Activated naive CD4-positive, alpha-beta T cell treated with anti-CD3 and anti-CD28 coated beads for 36 hours (primary cell): ENCODE measurements at regions of chr18 and their contacts with region 1.

Region 1: DNA sequence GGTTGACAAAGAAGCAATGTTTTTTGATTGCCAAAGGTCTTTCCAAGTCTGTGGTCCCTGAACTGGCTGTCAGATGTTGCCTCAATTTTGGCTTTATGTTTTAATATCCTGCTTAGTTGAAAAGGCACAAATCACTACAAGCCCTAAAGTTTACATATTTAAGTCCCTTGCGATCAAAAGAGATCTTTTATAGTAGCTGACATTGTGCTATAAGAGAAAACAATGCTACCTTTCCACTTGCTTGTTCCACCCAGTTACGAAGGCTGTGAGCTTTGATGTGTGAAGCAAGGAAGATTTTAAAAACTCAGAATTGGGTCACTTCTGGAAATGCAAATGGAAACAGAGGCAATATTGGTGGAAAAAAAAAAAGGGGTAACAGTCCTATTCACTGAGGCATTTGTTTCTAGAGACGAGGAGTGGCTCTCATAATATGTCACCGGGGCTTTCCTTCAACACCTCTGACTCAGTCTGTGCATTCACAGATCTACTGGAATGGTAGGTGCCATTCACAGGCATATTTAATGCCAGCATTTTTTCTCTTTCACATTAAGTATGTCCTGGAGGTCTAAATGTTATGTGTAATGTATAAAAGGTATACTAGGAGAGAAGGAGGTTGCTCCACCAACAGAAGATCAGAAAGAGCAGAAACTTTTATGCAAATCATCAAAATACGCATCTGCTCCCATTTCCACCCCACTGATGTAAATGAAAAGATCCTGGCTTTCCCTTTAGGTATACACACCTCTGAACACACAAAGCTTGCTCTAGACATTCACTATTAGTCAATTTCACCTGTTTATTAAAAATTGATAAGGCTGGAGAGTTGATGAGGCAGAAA is 91.8 kb downstream of the TGIF1 start:
- DNase-seq: peak; percentile 71
- H3K4me3 Mint-ChIP-seq: peak overlapping the region; percentile 0
- H3K27ac Mint-ChIP-seq: peak overlapping the region; percentile 66
- H3K4me1 Mint-ChIP-seq: peaks cover 24% of the 10 kb centered on the region
- H3K27me3 Mint-ChIP-seq: peaks cover 8% of the 10 kb centered on the region

Region 2: DNA sequence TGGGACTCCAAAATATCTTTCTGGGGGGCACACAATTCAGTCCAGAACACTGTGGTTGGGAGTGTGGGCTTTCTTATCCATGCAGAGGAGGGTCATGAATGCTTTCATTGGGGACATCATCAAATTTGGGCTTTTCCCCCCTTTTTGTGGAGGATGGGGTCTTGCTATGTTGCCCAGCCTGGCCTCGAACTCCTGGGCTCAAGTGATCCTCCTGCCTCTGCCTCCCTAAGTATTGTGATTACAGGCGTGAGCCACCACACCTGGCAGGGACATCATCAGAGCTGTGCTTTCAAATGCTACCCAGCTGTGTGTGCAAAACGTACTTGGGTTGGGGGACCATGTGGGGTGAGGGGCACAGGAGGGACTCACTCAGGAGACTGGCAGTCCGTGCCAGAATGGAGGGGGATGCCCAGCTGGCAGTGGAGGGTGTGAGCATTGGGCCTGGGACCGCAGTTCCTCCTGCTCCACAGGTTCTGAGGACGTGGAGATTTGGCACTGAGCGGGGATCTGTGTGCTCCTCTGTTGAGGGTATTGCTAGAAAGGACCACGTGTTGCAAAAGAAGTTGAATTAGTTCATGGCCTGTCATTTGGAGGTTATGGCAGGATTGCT is 670.6 kb before region 1 on chr18:
- CTCF ChIA-PET with region 1: no interaction called
- intact Hi-C with region 1: no loop called
- DNase-seq: no peak
- H3K4me3 Mint-ChIP-seq: no peak overlapping the region
- H3K27ac Mint-ChIP-seq: no peak overlapping the region
- H3K4me1 Mint-ChIP-seq: no peaks in the 10 kb centered on the region
- H3K27me3 Mint-ChIP-seq: no peaks in the 10 kb centered on the region

Region 3: GRCh38 chr18:3297025-3297984 is 244.5 kb before region 1 on chr18:
- CTCF ChIA-PET with region 1: no interaction called
- intact Hi-C with region 1: loop called (anchors 2 kb)
- DNase-seq: peak; percentile 98
- H3K4me3 Mint-ChIP-seq: peak overlapping the region; percentile 93
- H3K27ac Mint-ChIP-seq: peak overlapping the region; percentile 79
- H3K4me1 Mint-ChIP-seq: peaks cover 3% of the 10 kb centered on the region
- H3K27me3 Mint-ChIP-seq: peaks cover 11% of the 10 kb centered on the region

Region 4: GRCh38 chr18:3340015-3340681 is 201.6 kb before region 1 on chr18:
- CTCF ChIA-PET with region 1: no interaction called
- intact Hi-C with region 1: no loop called
- DNase-seq: peak; percentile 26
- H3K4me3 Mint-ChIP-seq: no peak overlapping the region
- H3K27ac Mint-ChIP-seq: peak overlapping the region; percentile 62
- H3K4me1 Mint-ChIP-seq: peaks cover 25% of the 10 kb centered on the region
- H3K27me3 Mint-ChIP-seq: no peaks in the 10 kb centered on the region

Region 5: GRCh38 chr18:3380384-3380961 is 161.3 kb before region 1 on chr18:
- CTCF ChIA-PET with region 1: no interaction called
- intact Hi-C with region 1: loop called (anchors 1 kb)
- DNase-seq: peak; percentile 37
- H3K4me3 Mint-ChIP-seq: no peak overlapping the region
- H3K27ac Mint-ChIP-seq: no peak overlapping the region
- H3K4me1 Mint-ChIP-seq: peaks cover 7% of the 10 kb centered on the region
- H3K27me3 Mint-ChIP-seq: no peaks in the 10 kb centered on the region

Region 6: GRCh38 chr18:3472681-3473544 is 68.9 kb before region 1 on chr18:
- CTCF ChIA-PET with region 1: no interaction called
- intact Hi-C with region 1: loop called (anchors 1 kb)
- DNase-seq: peak; percentile 44
- H3K4me3 Mint-ChIP-seq: no peak overlapping the region
- H3K27ac Mint-ChIP-seq: no peak overlapping the region
- H3K4me1 Mint-ChIP-seq: peaks cover 11% of the 10 kb centered on the region
- H3K27me3 Mint-ChIP-seq: no peaks in the 10 kb centered on the region

Region 7: DNA sequence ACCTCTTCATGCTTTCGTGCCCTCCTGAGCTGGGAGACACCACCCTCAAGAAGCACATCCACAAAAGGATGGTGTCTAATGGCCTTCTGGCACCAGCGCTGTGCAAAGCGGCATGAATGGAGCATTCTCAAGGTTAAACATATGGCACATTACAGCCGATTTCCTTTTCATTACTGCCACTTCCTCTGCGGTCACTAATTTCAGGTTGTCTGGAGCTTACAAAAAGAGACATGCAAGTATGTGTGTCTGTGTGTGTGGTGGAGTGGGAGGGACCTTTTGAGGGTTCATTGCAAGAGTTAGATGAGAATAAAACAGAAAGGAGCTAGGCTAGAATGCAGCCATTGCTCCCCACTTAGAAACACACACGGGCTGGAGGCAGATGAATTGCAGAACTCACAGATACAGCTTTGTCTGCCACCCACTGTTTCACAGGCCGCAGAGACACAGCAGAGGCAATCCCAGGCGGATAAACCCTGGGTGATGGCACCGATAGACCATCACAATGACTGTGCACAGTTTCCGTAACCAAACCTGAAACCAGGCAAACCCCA is 15.8 kb before region 1 on chr18:
- CTCF ChIA-PET with region 1: interaction called, 5 read pairs
- intact Hi-C with region 1: loop called (anchors 1 kb)
- DNase-seq: peak; percentile 58
- H3K4me3 Mint-ChIP-seq: no peak overlapping the region
- H3K27ac Mint-ChIP-seq: no peak overlapping the region
- H3K4me1 Mint-ChIP-seq: peaks cover 17% of the 10 kb centered on the region
- H3K27me3 Mint-ChIP-seq: no peaks in the 10 kb centered on the region

Region 8: GRCh38 chr18:3585656-3586509 is 44.1 kb after region 1 on chr18:
- CTCF ChIA-PET with region 1: interaction called, 5 read pairs
- intact Hi-C with region 1: loop called (anchors 1 kb)
- DNase-seq: peak; percentile 88
- H3K4me3 Mint-ChIP-seq: no peak overlapping the region
- H3K27ac Mint-ChIP-seq: peak overlapping the region; percentile 1
- H3K4me1 Mint-ChIP-seq: peaks cover 36% of the 10 kb centered on the region
- H3K27me3 Mint-ChIP-seq: no peaks in the 10 kb centered on the region

Region 9: GRCh38 chr18:3645384-3646156 is 103.8 kb after region 1 on chr18:
- CTCF ChIA-PET with region 1: no interaction called
- intact Hi-C with region 1: loop called (anchors 1 kb)
- DNase-seq: no peak
- H3K4me3 Mint-ChIP-seq: no peak overlapping the region
- H3K27ac Mint-ChIP-seq: no peak overlapping the region
- H3K4me1 Mint-ChIP-seq: peaks cover 32% of the 10 kb centered on the region
- H3K27me3 Mint-ChIP-seq: no peaks in the 10 kb centered on the region